OCI-LY7 (cell line): ENCODE measurements at regions of chr17 and their contacts with region 1.

Region 1: GRCh38 chr17:73645050-73645978 is 1.1 kb upstream of the SDK2 start:
- DNase-seq: peak; percentile 50
- H3K4me3 ChIP-seq: peak overlapping the region; percentile 33
- H3K27ac ChIP-seq: no peak overlapping the region
- H3K4me1 ChIP-seq: peaks cover 6% of the 10 kb centered on the region
- CTCF ChIP-seq: peak; percentile 57

Region 2: GRCh38 chr17:73585583-73585982 is 59.7 kb before region 1 on chr17:
- CTCF ChIA-PET with region 1: interaction called, 6 read pairs
- POLR2A ChIA-PET with region 1: interaction called, 7 read pairs
- intact Hi-C with region 1: loop called (anchors 2 kb)
- DNase-seq: peak; percentile 78
- H3K4me3 ChIP-seq: no peak overlapping the region
- H3K27ac ChIP-seq: no peak overlapping the region
- H3K4me1 ChIP-seq: peaks cover 63% of the 10 kb centered on the region
- CTCF ChIP-seq: peak; percentile 83

Region 3: DNA sequence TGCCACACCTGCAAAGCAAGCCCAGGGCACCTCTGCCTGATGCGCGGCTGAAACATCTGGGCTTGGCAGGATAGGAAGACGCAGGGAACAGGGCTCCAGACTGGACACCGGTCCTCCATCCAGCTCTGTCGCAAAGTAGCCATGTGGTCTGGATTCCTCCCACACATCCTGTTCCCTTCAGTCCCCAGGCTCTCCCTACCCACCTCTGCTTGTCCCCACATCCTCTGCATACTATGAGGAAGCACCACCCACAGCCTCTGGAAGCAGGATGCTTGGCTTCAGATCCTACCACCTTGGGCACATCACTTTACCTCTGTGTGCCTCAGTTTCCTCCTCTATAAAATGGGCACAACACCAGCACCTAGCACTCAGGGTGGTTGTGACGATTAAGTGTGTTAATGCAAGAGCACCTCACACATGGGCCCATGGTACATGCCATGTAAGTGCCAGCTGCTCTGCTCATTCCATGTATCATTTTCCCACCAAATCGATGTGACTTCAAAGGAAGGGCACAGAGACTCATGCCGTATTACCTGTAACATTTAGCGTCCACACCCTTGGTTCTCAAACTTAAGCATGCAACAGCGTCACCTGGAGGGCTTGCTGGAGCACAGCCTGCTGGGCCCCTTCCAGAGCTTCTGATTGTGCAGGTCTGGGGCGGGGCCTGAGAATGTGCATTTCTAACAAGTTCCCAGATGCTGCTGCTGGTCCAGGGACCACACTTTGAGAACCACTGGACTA is 137.5 kb after region 1 on chr17:
- CTCF ChIA-PET with region 1: no interaction called
- POLR2A ChIA-PET with region 1: no interaction called
- intact Hi-C with region 1: loop called (anchors 5 kb)
- DNase-seq: peak; percentile 66
- H3K4me3 ChIP-seq: no peak overlapping the region
- H3K27ac ChIP-seq: no peak overlapping the region
- H3K4me1 ChIP-seq: no peaks in the 10 kb centered on the region
- CTCF ChIP-seq: peak; percentile 82

Region 4: DNA sequence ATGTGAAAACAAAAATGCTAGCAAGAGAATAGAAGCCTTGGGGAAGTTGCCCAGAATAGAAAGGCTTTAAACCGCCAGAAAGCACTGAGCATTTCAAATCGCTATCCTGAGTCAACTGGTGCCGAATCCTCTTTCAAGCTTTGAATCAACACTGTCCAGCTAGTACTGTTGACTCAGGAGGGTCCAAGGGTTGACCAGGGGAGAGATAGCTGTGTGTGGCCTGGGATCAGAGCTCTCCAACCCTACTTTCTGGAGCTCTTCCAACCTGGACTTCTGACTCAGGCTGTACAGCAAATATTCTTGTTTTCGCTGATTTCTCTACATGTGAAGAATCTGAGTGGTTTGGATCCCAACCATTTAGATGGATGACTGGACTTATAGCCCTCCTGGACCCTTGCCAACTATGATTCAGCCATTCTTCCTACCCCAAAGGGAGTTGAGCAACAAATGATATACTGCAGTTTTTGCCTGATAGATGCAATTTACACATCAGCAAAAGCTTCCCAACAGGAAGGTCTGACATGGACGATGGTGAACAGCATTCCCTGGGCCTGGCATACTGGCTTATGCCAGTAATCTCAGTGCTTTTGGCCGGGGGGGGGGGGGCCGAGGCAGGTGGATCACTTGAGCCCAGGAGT is 152.9 kb after region 1 on chr17:
- CTCF ChIA-PET with region 1: no interaction called
- POLR2A ChIA-PET with region 1: no interaction called
- intact Hi-C with region 1: no loop called
- DNase-seq: no peak
- H3K4me3 ChIP-seq: no peak overlapping the region
- H3K27ac ChIP-seq: no peak overlapping the region
- H3K4me1 ChIP-seq: no peaks in the 10 kb centered on the region
- CTCF ChIP-seq: no peak

Region 5: DNA sequence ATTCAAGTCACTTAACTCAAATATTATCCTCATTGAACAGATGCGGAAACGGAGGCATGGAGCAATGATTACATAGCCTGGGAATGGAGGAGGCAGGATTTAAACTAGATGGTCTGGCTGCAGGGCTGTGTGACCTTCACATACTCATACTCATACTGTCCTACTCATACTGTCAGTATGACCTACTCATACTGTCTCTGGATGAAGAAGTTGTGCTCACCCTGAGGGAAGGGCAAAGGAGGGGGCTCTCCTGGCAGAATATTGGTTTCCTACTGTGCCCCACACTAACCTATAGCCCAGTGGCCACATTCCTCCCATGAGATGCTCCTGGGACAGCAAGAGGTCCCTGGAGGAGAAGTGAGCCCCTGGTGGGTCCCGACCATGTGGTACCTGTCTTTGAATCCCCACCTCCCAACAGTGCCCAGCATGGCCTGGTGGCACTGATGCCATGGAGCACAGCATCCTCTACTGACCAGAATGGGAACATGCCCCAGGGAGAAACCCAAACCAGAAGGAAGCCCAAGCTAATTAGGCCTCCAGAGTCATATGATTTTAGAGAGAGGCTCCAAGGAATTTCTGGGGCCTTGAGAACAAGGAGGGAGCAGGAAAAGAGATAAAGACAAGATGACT is 196.2 kb after region 1 on chr17:
- CTCF ChIA-PET with region 1: no interaction called
- POLR2A ChIA-PET with region 1: no interaction called
- intact Hi-C with region 1: loop called (anchors 5 kb)
- DNase-seq: peak; percentile 58
- H3K4me3 ChIP-seq: no peak overlapping the region
- H3K27ac ChIP-seq: no peak overlapping the region
- H3K4me1 ChIP-seq: no peaks in the 10 kb centered on the region
- CTCF ChIP-seq: peak; percentile 85

Region 6: GRCh38 chr17:73956669-73957465 is 311.6 kb after region 1 on chr17:
- CTCF ChIA-PET with region 1: no interaction called
- POLR2A ChIA-PET with region 1: no interaction called
- intact Hi-C with region 1: loop called (anchors 5 kb)
- DNase-seq: peak; percentile 68
- H3K4me3 ChIP-seq: no peak overlapping the region
- H3K27ac ChIP-seq: no peak overlapping the region
- H3K4me1 ChIP-seq: no peaks in the 10 kb centered on the region
- CTCF ChIP-seq: peak; percentile 90

Region 7: GRCh38 chr17:74176546-74177001 is 531.3 kb after region 1 on chr17:
- CTCF ChIA-PET with region 1: no interaction called
- POLR2A ChIA-PET with region 1: no interaction called
- intact Hi-C with region 1: loop called (anchors 10 kb)
- DNase-seq: peak; percentile 63
- H3K4me3 ChIP-seq: no peak overlapping the region
- H3K27ac ChIP-seq: no peak overlapping the region
- H3K4me1 ChIP-seq: no peaks in the 10 kb centered on the region
- CTCF ChIP-seq: peak; percentile 98